ENCODE measurements at regions of chr6 and their contacts with region 1.

Region 1: GRCh38 chr6:160690458-160690857 is 11.6 kb upstream of the PLG start:
- DNase-seq: no peak
- H3K4me3 Mint-ChIP-seq: no peak overlapping the region
- H3K27ac Mint-ChIP-seq: no peak overlapping the region
- H3K4me1 Mint-ChIP-seq: no peaks in the 10 kb centered on the region
- H3K27me3 Mint-ChIP-seq: peaks cover 15% of the 10 kb centered on the region
- CTCF ChIP-seq: no peak

Region 2: DNA sequence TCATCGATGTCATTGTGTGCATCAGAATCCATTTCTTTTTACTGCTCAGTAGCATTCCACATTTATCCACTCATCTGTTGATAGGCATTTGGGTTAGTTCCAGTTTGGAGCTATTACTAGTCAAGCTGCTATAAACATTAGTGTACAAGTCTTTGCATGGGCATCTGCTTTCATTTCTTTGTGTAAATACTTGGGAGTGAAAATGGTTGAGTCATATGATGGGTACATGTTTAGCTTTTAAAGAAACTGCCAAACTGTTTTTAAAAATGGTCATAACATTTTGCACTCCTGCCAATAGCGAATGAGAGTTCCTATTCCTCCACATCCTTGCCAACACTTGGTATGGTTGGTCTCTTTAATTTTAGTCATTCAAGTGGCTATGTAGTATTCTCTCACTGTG is 410.6 kb before region 1 on chr6:
- CTCF ChIA-PET with region 1: interaction called, 11 read pairs
- intact Hi-C with region 1: no loop called
- DNase-seq: no peak
- H3K4me3 Mint-ChIP-seq: no peak overlapping the region
- H3K27ac Mint-ChIP-seq: no peak overlapping the region
- H3K4me1 Mint-ChIP-seq: no peaks in the 10 kb centered on the region
- H3K27me3 Mint-ChIP-seq: no peaks in the 10 kb centered on the region
- CTCF ChIP-seq: no peak

Region 3: DNA sequence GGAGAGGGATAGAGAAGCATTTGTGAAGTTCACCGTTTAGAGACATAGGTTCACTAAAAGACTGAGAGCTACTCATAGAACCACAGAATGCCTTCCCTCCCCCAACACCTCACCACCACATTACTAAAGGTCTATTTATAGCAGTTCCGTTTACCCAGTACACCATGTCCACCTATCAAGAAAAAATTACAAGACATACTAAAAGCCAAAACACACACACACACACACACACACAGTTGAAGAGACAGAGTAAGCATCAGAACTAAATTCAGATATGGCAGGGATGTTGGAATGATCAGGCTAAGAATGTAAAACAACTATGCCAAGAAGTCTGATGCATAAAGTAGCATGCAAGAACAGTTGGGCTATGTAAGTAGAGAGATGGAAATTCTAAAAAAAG is 290.0 kb before region 1 on chr6:
- CTCF ChIA-PET with region 1: no interaction called
- intact Hi-C with region 1: no loop called
- DNase-seq: no peak
- H3K4me3 Mint-ChIP-seq: no peak overlapping the region
- H3K27ac Mint-ChIP-seq: no peak overlapping the region
- H3K4me1 Mint-ChIP-seq: no peaks in the 10 kb centered on the region
- H3K27me3 Mint-ChIP-seq: no peaks in the 10 kb centered on the region
- CTCF ChIP-seq: no peak

Region 4: GRCh38 chr6:160733050-160733646 is 42.7 kb after region 1 on chr6:
- CTCF ChIA-PET with region 1: no interaction called
- intact Hi-C with region 1: no loop called
- DNase-seq: peak; percentile 63
- H3K4me3 Mint-ChIP-seq: no peak overlapping the region
- H3K27ac Mint-ChIP-seq: no peak overlapping the region
- H3K4me1 Mint-ChIP-seq: no peaks in the 10 kb centered on the region
- H3K27me3 Mint-ChIP-seq: no peaks in the 10 kb centered on the region
- CTCF ChIP-seq: peak; percentile 50

Region 5: GRCh38 chr6:160899671-160900430 is 209.4 kb after region 1 on chr6:
- CTCF ChIA-PET with region 1: no interaction called
- intact Hi-C with region 1: no loop called
- DNase-seq: no peak
- H3K4me3 Mint-ChIP-seq: no peak overlapping the region
- H3K27ac Mint-ChIP-seq: no peak overlapping the region
- H3K4me1 Mint-ChIP-seq: no peaks in the 10 kb centered on the region
- H3K27me3 Mint-ChIP-seq: no peaks in the 10 kb centered on the region
- CTCF ChIP-seq: no peak

Region 6: DNA sequence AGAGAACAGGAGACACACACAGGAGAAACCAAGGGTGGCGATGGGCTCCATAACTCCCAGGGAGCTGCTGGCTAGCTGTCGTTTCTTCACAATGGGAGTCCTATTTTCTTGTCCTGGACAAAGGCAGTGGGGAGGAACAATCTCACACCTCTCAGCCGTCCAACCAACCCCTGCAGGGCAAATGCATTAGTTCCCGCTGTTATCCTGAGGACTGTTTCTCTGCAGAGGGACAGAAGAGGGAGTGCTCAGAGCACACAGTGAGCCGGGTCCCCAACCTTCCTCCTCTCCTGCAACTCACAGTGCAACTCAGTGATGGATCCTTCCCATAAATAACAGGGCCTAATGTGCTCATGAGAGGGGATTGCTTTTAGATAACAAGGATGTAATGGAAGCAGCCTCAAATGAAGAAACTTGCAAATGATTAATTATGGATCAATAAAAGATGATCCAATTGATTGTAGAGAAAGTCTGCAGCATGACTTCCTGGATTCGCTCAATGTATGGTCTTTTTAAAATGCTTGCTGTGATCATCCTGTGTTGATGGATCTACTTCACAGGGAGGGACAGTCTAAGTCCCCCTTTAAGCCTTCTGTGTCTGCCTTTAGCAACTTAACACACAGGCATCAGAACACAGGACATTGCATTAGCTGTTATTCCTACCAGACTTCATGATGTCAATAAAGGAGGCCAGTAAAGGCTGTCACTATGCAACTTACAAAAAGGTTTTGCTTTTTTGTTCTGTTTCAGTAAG is 1036.8 kb after region 1 on chr6:
- CTCF ChIA-PET with region 1: no interaction called
- intact Hi-C with region 1: no loop called
- DNase-seq: no peak
- H3K4me3 Mint-ChIP-seq: no peak overlapping the region
- H3K27ac Mint-ChIP-seq: no peak overlapping the region
- H3K4me1 Mint-ChIP-seq: no peaks in the 10 kb centered on the region
- H3K27me3 Mint-ChIP-seq: no peaks in the 10 kb centered on the region
- CTCF ChIP-seq: no peak

Measured in Calu3 (cell line).